ENCODE measurements at regions of chr5 and their contacts with region 1.

Region 1: GRCh38 chr5:54229041-54229780 is 81.2 kb downstream of the ARL15 start:
- DNase-seq: peak; percentile 23 to 83
- H3K4me3 ChIP-seq: no peak overlapping the region
- H3K4me1 ChIP-seq: no peaks in the 10 kb centered on the region
- H3K27me3 ChIP-seq: no peaks in the 10 kb centered on the region

Region 2: GRCh38 chr5:53170748-53171349 is 1058.4 kb before region 1 on chr5:
- in situ Hi-C with region 1: loop called (anchors 25 kb)
- DNase-seq: peak in 1 of 2 experiments; percentile 14
- H3K4me3 ChIP-seq: no peak overlapping the region
- H3K4me1 ChIP-seq: no peaks in the 10 kb centered on the region
- H3K27me3 ChIP-seq: 0 out of 2 replicates have a peak, but pooled peaks cover 4% of the 10 kb centered on the region

Region 3: GRCh38 chr5:54673523-54674225 is 444.5 kb after region 1 on chr5:
- in situ Hi-C with region 1: no loop called
- DNase-seq: no peak
- H3K4me3 ChIP-seq: no peak overlapping the region
- H3K4me1 ChIP-seq: no peaks in the 10 kb centered on the region
- H3K27me3 ChIP-seq: no peaks in the 10 kb centered on the region

Measured in HAP-1 (cell line).